ENCODE measurements at regions of chr15 and their contacts with region 1.

Region 1: DNA sequence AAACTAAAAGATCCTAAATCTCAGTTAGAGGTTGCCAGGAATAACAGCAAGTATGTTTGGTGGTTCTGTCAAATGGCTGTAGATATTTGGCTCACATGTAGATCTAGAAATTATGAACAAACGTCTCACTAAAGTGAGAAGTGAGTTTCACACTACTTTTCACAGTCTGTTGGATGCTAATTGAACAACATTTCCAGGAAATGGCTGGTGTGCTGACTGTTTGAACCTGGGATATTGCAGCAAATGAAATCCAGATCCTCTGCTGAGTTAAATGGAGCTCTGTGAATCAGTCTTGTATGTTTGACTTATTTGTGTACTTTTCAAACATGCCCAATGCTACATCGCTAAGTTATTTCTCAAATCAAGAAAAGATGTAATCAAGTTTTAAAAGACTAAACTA is 21.3 kb upstream of the RSL24D1 start:
- DNase-seq: no peak
- H3K4me3 ChIP-seq: no peak overlapping the region
- H3K27ac ChIP-seq: no peak overlapping the region
- H3K4me1 ChIP-seq: peaks cover 12 to 16% of the 10 kb centered on the region in 2 donors
- H3K27me3 ChIP-seq: no peaks in the 10 kb centered on the region
- CTCF ChIP-seq: no peak
- POLR2A ChIP-seq: no peak

Region 2: GRCh38 chr15:55151631-55152030 is 66.4 kb before region 1 on chr15:
- intact Hi-C with region 1: no loop called
- DNase-seq: no peak
- H3K4me3 ChIP-seq: no peak overlapping the region
- H3K27ac ChIP-seq: no peak overlapping the region
- H3K4me1 ChIP-seq: no peaks in the 10 kb centered on the region
- H3K27me3 ChIP-seq: no peaks in the 10 kb centered on the region
- CTCF ChIP-seq: no peak
- POLR2A ChIP-seq: no peak

Region 3: GRCh38 chr15:55290528-55291057 is 72.5 kb after region 1 on chr15:
- intact Hi-C with region 1: loop called (anchors 2 kb)
- DNase-seq: peak; percentile 87 to 89
- H3K4me3 ChIP-seq: peak overlapping the region in 1 of 3 donors; percentile 63
- H3K27ac ChIP-seq: peak overlapping the region; percentile 54 to 93 (median 88)
- H3K4me1 ChIP-seq: peaks cover 7 to 13% of the 10 kb centered on the region in 2 donors
- H3K27me3 ChIP-seq: no peaks in the 10 kb centered on the region
- CTCF ChIP-seq: peak; percentile 67 to 94 (median 86)
- POLR2A ChIP-seq: no peak

Region 4: GRCh38 chr15:55434989-55435825 is 217.2 kb after region 1 on chr15:
- intact Hi-C with region 1: loop called (anchors 10 kb)
- DNase-seq: no peak
- H3K4me3 ChIP-seq: no peak overlapping the region
- H3K27ac ChIP-seq: no peak overlapping the region
- H3K4me1 ChIP-seq: no peaks in the 10 kb centered on the region
- H3K27me3 ChIP-seq: no peaks in the 10 kb centered on the region
- CTCF ChIP-seq: peak in 4 of 6 experiments; percentile 31 to 52 (median 48)
- POLR2A ChIP-seq: no peak

Measured in thyroid gland (tissue), 4 donors.